ENCODE measurements at regions of chr3 and their contacts with region 1.

Region 1: DNA sequence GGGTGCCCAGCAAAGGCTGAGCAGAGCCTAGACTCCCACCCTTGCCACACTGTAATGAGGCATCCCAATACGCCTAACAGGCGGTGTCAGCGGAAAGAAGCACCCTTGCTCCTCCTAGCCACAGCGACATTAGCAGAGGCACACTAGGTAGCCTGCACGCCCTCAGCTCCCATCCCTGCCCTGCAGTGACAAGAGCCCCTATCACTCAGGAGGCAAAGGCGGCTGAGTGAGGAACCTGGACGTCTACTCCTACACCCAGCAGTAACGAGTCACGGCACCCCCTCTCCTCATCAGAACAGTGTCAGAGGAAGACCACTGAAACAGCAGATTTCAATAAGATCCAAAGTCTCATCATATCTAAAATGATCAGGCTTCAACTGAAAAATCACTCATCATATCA is 12.0 kb upstream of the MAP6D1 start:
- DNase-seq: peak; percentile 58

Region 2: GRCh38 chr3:182364723-182365650 is 1472.4 kb before region 1 on chr3:
- intact Hi-C with region 1: loop called in 1 of 2 experiments (anchors 10 kb)
- DNase-seq: no peak

Region 3: DNA sequence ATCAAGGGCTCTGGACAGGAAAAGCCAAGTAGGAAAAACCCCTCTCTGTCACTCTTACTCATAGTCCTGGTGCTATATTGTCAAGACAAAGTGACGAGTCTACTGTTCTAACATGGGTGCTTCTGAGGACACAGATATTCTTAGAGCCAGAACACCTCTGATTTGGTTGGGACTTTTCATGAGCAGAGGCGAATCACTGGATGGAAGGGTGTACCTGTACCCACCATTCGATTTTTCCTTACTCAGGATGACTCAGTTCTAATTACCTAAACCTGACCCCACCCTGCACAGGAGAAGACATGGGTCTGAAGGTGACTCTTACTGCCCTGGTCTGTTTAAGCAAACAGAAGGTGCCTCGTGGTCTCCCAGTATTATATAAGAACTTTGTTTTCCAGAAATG is 121.8 kb after region 1 on chr3:
- intact Hi-C with region 1: no loop called
- DNase-seq: no peak

Region 4: DNA sequence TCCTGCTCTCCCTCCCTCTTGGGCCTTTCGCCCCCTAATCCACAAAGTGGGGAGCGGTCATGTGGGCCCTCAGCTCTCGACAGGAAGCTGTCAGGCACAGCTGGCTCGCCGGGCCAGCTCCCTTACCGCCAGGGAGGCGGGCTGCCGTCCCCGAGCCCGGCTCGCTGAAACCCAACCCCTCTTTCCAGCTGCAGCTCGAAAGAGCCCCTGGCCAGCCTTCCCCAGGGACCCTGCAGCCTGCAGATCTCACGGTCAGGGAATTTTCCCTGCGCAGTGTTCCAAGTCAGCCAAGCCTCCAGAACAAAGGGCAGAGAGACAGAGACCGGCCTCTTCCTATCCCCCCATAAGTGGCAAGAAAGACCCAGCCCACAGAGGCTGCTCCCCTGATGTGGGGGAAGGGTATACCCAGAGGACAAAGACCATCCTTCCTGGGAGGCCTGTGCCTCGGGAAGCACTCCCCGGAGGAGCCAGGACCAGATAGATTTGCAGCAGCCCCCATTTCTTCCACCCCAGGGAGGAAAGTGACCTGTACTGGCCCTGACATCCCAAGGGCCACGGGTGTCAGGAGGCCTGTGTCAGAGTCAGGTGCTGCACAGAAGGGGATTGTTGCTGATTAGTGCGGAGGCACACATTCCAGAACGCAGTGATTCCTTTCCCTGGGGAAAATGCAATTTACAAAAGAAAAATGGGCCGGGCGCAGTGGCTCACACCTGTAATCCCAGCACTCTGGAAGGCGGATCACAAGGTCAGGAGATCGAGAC is 841.8 kb after region 1 on chr3:
- intact Hi-C with region 1: no loop called
- DNase-seq: no peak